ENCODE measurements at regions of chr1 and their contacts with region 1.

Region 1: DNA sequence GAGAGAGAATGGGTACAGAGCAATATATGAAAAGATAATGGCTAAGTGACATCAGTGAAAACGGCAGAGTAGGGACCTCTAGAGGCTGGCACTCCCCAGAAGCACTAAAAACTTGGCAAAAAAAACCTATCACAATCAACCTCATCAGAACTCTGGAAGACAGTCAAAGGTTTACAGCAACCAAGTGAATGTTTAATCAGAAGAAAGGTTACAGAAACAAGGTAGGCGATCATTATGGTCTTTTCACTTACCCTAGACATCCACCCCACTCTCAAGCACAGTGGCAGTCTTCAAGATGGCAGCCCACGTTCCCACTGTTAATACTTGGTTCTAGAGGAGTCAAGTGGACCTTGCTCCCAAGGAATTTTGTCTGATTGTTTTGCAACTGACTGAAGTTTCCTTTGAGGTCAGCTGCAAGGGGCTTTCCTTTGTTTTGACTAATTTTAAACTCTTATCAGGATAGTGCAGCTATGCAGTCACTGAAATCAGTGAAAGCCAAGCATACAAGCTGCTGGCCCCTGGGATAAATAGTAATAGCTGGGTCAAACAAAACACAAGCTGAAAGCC is 7.2 kb downstream of the KIFAP3 start:
- DNase-seq: no peak
- H3K4me3 ChIP-seq: no peak overlapping the region
- H3K27ac ChIP-seq: peak overlapping the region in 1 of 2 donors; percentile 16
- H3K4me1 ChIP-seq: peaks cover 0 to 50% (median 12%) of the 10 kb centered on the region in 4 donors
- H3K27me3 ChIP-seq: no peaks in the 10 kb centered on the region
- CTCF ChIP-seq: no peak

Region 2: DNA sequence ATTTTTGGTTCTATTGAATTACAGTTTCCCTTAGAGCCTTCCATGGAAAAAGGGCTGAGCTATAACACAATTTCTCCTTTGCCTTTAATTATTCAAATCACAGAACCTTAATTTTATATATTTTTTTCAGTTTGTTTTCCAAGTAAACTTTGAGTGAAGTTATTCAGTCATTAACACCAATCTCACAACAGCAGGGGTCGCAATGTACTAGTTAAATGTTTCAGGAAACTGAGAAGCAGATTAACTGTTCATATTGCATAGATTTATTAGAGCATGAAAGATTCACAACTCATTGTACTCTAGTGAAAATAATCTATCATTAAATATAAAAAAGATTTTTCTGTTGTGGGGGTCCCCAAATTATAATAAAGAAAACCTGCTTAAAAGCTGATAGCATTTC is 56.9 kb before region 1 on chr1:
- intact Hi-C with region 1: loop called (anchors 10 kb)
- DNase-seq: peak in 1 of 2 donors; percentile 51
- H3K4me3 ChIP-seq: no peak overlapping the region
- H3K27ac ChIP-seq: no peak overlapping the region
- H3K4me1 ChIP-seq: no peaks in the 10 kb centered on the region
- H3K27me3 ChIP-seq: no peaks in the 10 kb centered on the region
- CTCF ChIP-seq: peak; percentile 32 to 55

Measured in tibial artery (tissue), 4 donors.